ENCODE measurements at regions of chr1 and their contacts with region 1.

Region 1: GRCh38 chr1:94025383-94026340 is 95.3 kb downstream of the ABCA4 start:
- DNase-seq: peak; percentile 82

Region 2: GRCh38 chr1:93042187-93043056 is 983.2 kb before region 1 on chr1:
- CTCF ChIA-PET with region 1: no interaction called
- POLR2A ChIA-PET with region 1: no interaction called
- DNase-seq: no peak

Region 3: GRCh38 chr1:94012686-94013624 is 12.7 kb before region 1 on chr1:
- CTCF ChIA-PET with region 1: interaction called, 15 read pairs
- POLR2A ChIA-PET with region 1: no interaction called
- DNase-seq: no peak

Region 4: GRCh38 chr1:94039514-94039870 is 13.8 kb after region 1 on chr1:
- CTCF ChIA-PET with region 1: interaction called, 66 read pairs
- POLR2A ChIA-PET with region 1: interaction called, 4 read pairs
- DNase-seq: peak; percentile 86

Region 5: GRCh38 chr1:94045465-94046056 is 19.9 kb after region 1 on chr1:
- CTCF ChIA-PET with region 1: interaction called, 66 read pairs
- POLR2A ChIA-PET with region 1: interaction called, 4 read pairs
- DNase-seq: peak; percentile 79

Region 6: GRCh38 chr1:94061513-94062443 is 36.1 kb after region 1 on chr1:
- CTCF ChIA-PET with region 1: interaction called, 19 read pairs
- POLR2A ChIA-PET with region 1: no interaction called
- DNase-seq: peak; percentile 91

Region 7: GRCh38 chr1:94142022-94142421 is 116.4 kb after region 1 on chr1:
- CTCF ChIA-PET with region 1: no interaction called
- POLR2A ChIA-PET with region 1: no interaction called
- DNase-seq: no peak